PC-9 (cell line): ENCODE measurements at regions of chr3 and their contacts with region 1.

Region 1: DNA sequence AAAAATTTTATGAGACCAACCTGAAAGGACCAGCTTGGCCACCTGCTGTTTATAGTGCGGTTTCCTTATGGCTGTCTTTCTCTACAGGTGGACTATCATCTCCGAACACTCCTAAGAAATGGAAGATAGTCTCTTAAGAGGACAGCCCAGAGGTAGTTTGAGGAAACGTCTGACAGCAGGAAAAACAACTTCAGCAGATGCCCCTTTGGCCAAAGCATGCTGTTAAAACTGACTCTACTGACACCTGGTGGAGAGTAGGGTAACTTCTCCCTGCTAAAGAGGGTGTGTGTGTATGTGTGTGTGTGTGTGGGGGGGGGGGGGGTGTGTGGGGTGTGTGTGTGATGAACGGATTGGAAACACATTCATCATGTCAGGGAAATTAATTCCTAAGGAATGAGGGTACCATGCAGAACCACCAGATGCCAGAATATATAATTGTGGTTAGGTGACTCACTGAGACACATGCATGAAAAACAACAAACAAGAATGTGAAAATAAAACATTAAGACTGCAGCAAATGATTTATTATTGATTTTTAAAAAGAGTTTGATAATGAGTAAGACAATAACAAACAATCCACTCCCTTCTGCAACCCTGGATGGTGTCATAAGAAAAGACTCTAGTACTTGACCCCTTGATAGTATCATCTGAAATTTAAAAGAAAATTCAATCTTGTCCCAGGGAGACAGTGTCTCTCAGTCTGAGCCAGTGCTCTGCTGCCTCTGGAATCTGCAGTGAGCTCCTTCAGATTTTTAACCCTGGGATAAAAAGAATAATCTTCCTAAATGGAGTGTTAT is 256.5 kb downstream of the THRB start:
- DNase-seq: peak; percentile 63 to 95
- H3K4me3 ChIP-seq: no peak overlapping the region; the same call in 1 of the 2 replicates
- H3K27ac ChIP-seq: peak overlapping the region; percentile 77
- H3K4me1 ChIP-seq: peaks cover 65% of the 10 kb centered on the region
- H3K27me3 ChIP-seq: no peaks in the 10 kb centered on the region
- CTCF ChIP-seq: peak; percentile 84

Region 2: DNA sequence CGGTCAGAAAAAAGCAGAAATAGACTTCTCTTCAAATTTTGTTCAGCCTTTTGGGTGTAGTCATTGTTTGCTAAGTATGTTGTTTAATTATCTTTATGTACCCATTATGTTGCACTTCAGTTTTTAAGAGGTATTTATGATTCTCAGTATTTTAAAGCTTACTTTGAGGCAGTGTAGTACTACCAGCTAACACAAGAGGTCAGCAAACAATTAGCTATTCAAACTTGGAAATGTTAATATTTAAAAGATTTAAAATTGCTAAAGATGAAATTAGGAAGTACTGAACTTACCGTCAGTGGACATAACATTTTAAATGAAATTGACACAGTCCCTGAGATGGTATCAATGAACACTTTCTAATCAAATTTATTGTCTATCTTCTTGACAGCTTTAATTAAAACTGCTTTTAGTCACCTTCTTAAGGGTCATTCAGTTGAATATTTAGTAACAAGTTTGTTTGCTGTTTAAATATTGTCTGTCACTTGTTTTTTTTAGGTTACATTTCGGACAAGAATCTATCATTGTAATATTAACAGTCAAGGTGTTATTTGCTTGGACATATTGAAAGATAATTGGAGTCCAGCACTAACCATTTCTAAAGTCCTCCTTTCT is 349.4 kb before region 1 on chr3:
- CTCF ChIA-PET with region 1: no interaction called
- POLR2A ChIA-PET with region 1: no interaction called
- intact Hi-C with region 1: loop called (anchors 5 kb)
- DNase-seq: no peak
- H3K4me3 ChIP-seq: no peak overlapping the region
- H3K27ac ChIP-seq: peak overlapping the region; percentile 57
- H3K4me1 ChIP-seq: peaks cover 28% of the 10 kb centered on the region
- H3K27me3 ChIP-seq: no peaks in the 10 kb centered on the region
- CTCF ChIP-seq: peak; percentile 92

Region 3: DNA sequence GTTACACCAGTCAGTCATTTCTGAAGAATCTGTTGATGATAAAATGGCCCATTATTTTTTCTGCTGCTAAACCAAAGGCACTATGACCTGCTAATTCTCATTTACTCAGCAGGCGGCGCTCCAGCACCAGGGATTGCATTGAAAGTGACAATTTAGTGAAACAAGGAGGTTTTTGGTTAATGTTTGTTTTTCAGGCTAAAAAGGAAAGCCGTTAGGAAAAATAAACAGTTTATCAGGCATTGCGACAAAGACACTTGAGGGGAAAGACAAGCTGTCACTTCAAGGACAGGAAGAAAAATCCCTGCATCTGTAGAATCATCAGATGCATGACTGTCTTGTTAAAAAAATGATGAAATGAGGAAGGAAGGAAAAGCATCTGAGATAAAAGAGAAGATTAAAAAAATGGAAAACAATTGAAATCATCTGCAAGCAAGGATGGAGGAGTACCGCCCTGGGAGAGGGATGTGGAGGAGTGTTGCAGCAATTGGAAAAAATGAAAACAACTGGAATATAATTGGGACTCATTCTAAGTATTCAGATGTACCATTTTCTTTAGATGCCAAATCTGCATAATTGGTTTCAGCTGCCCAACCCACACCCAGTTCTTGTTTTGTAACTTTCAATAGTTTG is 239.0 kb before region 1 on chr3:
- CTCF ChIA-PET with region 1: no interaction called
- POLR2A ChIA-PET with region 1: no interaction called
- intact Hi-C with region 1: loop called (anchors 1 kb)
- DNase-seq: peak in 1 of 2 experiments; percentile 76
- H3K4me3 ChIP-seq: no peak overlapping the region
- H3K27ac ChIP-seq: no peak overlapping the region
- H3K4me1 ChIP-seq: no peaks in the 10 kb centered on the region
- H3K27me3 ChIP-seq: no peaks in the 10 kb centered on the region
- CTCF ChIP-seq: peak; percentile 98

Region 4: DNA sequence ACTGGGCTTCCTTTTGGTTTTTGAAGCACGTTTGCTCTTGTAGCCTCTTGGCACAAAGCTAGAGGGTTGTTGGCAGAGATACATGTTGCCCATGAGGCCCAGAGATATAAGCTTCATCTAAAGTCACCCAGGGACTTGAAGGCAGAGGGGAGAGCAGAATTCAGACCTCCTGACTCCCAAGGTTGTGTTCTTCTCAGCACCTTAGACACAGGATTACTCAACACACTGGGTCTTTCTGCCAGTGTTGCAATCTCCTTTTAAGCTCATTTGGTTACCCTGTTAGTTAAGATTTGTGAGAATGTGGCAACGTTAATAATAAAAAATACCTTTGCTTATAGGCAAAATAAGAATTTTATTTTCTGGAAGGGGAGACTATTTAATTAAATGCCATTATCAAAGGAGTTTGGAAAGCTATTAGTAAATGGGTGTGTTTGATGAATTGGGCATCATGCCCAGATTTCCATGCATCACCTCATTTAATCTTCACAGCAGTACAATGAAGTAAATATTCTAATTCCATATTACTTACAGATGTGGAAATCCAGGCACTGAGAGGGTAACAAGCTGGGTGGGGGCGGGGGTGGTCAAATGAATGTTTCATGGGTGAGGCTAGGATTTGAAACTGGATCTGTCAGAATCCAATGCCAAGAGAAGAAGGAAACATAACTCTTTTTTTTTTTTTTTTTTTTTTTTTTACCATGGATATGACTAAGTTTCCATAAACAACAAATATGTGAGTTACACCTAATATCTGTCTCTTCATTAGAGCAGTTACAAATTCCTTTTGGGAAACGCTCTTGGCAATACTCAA is 109.8 kb before region 1 on chr3:
- CTCF ChIA-PET with region 1: no interaction called
- POLR2A ChIA-PET with region 1: no interaction called
- intact Hi-C with region 1: loop called (anchors 1 kb)
- DNase-seq: peak; percentile 19 to 76
- H3K4me3 ChIP-seq: no peak overlapping the region
- H3K27ac ChIP-seq: peak overlapping the region; percentile 49
- H3K4me1 ChIP-seq: peaks cover 23% of the 10 kb centered on the region
- H3K27me3 ChIP-seq: no peaks in the 10 kb centered on the region
- CTCF ChIP-seq: no peak

Region 5: DNA sequence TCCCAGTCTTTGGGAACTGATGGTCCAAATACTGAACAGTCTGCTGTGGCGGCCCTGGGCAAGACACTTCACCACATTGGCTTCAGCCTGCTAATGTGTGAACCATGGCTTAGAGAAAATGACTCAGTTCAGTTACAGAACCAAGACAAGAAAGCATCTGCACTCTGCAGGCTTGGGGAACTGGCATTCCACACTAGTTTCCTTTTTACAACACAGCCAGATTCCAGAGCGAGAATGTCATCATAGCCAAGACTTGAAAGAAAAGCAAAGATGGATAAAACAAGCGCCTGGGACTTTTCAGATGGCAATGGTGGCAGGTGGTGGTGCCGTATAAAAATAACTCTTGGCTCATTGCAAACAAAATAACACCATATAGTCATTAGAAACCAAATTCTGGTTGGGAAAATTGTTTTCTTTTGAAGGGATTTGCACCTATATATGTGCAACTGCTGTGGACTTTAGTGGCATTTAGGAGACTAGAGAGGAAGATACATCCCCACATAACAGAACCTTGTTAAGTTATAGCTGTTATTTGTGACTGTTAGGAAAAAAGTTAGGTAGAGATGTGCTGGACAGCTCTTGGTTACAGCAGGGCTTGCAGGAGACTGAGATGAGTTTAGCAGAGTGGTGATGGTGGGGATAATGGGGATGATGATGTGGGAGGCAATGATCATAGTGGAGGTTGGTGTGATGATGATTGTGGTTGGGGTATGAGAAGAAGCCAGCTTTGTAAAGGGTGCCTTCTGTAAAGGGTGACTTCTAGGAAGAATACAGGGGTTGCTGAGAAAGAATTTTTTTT is 17.1 kb before region 1 on chr3:
- CTCF ChIA-PET with region 1: no interaction called
- POLR2A ChIA-PET with region 1: no interaction called
- intact Hi-C with region 1: loop called (anchors 1 kb)
- DNase-seq: peak; percentile 52 to 83
- H3K4me3 ChIP-seq: no peak overlapping the region
- H3K27ac ChIP-seq: peak overlapping the region; percentile 50
- H3K4me1 ChIP-seq: peaks cover 18% of the 10 kb centered on the region
- H3K27me3 ChIP-seq: no peaks in the 10 kb centered on the region
- CTCF ChIP-seq: no peak

Region 6: DNA sequence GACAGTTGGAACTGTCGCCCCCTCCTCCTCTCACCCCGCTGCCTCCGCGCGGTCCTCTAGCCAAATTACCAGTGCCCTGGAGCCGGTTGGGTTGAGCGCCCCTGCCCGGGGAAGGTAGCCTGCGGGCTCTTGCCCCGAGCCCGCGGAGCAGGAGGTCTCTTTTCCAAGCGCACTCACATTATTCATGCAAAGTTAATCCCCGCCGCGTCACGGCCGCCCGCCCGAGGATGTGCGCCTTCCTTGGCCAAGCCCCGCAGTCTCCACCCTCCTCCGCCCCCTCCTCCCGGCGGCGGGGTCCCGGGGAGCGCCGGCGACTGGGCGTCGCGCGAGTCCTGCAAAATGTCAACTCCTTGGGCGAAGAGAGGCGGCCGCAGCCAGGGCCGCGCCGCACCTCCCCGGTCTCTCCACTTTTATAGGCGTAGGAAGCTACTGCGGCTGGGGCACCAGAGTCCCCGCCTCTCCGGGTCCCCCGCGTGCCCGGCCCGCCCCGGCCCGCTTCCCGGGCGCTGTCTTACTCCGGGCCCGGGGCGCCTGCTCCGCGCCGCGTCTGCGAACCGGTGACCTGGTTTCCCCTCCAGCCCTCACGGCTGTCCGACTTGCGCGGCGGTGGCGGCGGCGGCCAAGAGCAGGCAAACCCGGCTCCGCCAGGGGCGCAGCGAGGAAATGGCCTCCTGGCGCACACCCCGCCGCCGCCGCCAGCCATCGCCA is 256.6 kb after region 1 on chr3 and contains the start of gene THRB:
- CTCF ChIA-PET with region 1: no interaction called
- POLR2A ChIA-PET with region 1: no interaction called
- intact Hi-C with region 1: loop called (anchors 1 kb)
- DNase-seq: peak; percentile 49 to 75
- H3K4me3 ChIP-seq: peak within 1 kb of the TSS; percentile 65
- H3K27ac ChIP-seq: peak within 1 kb of the TSS; percentile 89
- H3K4me1 ChIP-seq: peaks cover 46% of the 10 kb centered on the region
- H3K27me3 ChIP-seq: no peaks in the 10 kb centered on the region
- CTCF ChIP-seq: peak; percentile 36; the same call in 1 of the 2 replicates
- total RNA-seq, gene THRB: 9.7 and 11.2 TPM in 2 replicates